ENCODE measurements at regions of chr14 and their contacts with region 1.

Region 1: GRCh38 chr14:24215495-24216344 is at the start of gene MDP1:
- DNase-seq: peak; percentile 71 to 93 (median 86)
- ATAC-seq: peak; percentile 75
- H3K4me3 Mint-ChIP-seq: peak within 1 kb of the TSS; percentile 89 to 94 (median 92)
- H3K27ac Mint-ChIP-seq: peak within 1 kb of the TSS; percentile 93 to 100 (median 99)
- H3K4me1 Mint-ChIP-seq: peaks cover 27 to 55% (median 54%) of the 10 kb centered on the region in 4 donors
- H3K27me3 Mint-ChIP-seq: peaks cover 0 to 2% (median 0%) of the 10 kb centered on the region in 5 donors
- polyA plus RNA-seq, gene MDP1: 33.8 to 39.1 (median 34.5) TPM

Region 2: GRCh38 chr14:24114536-24115450 is 100.9 kb before region 1 on chr14 and contains the starts of genes DCAF11 and NRL:
- POLR2A ChIA-PET with region 1: interaction called, 14 read pairs
- DNase-seq: peak; percentile 96 to 100 (median 99)
- ATAC-seq: peak; percentile 84
- H3K4me3 Mint-ChIP-seq: peak within 1 kb of the TSS; percentile 89 to 99 (median 98)
- H3K27ac Mint-ChIP-seq: peak within 1 kb of the TSS; percentile 95 to 100 (median 99)
- H3K4me1 Mint-ChIP-seq: peaks cover 22 to 39% (median 37%) of the 10 kb centered on the region in 4 donors
- H3K27me3 Mint-ChIP-seq: peaks cover 0 to 4% (median 0%) of the 10 kb centered on the region in 5 donors
- polyA plus RNA-seq, gene DCAF11: 68.0 to 83.8 (median 71.9) TPM
- polyA plus RNA-seq, gene NRL: 3.0 to 3.5 (median 3.1) TPM

Region 3: DNA sequence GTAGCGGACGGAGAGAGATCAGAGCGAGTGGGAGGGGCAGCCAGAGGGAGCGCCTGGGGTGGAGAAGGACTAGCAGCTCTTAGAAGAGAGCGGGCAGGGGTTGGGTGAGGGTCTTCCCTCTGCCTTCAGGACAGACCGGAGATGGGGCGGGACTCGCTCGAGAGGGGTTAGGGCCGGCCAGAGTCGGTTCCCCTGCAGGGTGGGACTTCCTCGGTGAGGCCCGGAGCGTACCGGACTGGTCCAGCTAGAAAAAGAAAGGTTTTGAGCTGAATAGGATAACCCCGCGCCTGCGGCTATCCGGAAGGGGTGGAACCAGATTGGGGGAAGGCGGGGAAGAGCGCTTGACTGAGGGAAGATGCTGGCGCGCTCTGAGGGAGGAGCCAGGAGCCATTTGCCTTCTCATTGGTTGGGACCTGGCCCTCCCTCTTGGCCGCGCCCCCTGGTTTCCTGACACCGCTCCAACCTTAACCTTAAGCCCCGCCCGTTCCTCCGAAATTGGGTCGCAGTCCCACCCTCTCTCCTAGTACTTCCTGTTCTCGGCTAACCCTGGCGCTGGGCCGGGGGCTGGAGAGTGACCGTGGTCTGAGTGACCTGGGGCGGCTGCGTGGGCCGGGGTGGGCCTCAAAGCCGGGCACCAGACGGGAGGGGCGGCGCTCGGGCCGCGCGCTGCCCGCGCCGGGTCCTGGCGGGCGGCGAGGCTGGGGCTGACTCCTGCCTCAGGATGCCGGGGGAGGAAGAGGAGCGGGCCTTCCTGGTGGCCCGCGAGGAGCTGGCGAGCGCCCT is 68.6 kb before region 1 on chr14 and contains the start of gene RNF31:
- POLR2A ChIA-PET with region 1: interaction called, 15 read pairs
- DNase-seq: peak; percentile 91 to 98 (median 96)
- ATAC-seq: peak; percentile 87 to 90
- H3K4me3 Mint-ChIP-seq: peak within 1 kb of the TSS; percentile 94 to 100 (median 98)
- H3K27ac Mint-ChIP-seq: peak within 1 kb of the TSS; percentile 91 to 99 (median 96)
- H3K4me1 Mint-ChIP-seq: peaks cover 22 to 71% (median 69%) of the 10 kb centered on the region in 4 donors
- H3K27me3 Mint-ChIP-seq: no peaks in the 10 kb centered on the region
- polyA plus RNA-seq, gene RNF31: 34.1 to 45.3 (median 37.6) TPM

Region 4: DNA sequence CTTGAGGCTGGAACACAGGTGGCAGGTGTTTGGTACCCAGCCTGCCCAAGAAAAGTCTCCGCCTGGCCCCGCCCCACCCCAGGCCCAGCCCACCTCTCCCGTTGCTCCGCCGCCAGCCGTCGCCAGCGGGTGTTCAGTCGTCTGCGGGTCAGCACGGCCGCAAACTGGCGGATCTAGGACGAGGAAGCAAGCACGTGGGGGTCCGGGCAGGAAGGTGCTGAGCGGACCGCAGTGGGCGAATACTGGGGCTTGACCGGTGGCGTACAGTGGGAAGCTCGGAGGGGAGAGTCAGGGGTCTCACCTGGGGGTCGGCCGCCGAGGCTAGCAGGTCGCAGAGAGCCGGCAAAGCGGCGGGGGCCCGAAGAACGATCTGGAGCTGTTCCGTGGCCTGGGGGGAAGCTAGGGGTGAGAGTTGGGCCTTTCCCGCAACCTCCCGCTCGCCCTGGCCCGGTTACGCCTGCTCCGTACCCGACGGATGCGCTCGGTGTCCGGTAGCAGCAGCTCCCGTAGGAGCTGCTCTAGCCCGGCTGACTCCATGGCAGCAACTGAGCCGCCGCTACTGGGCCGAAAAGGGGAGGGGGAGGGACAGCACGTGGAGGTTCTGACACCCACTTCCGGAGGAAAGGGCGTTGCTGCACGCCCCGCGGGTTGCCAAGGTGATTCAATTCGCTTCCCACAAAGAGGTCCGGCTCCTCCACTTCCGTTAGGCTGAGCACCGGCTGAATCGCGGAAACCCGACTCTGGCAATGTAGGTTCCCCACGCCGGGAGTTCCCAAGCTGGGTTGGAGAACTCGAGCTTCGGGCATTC is 27.3 kb before region 1 on chr14 and contains the start of gene IPO4:
- POLR2A ChIA-PET with region 1: interaction called, 36 read pairs
- DNase-seq: peak; percentile 85 to 98 (median 94)
- ATAC-seq: peak; percentile 90 to 97
- H3K4me3 Mint-ChIP-seq: peak within 1 kb of the TSS; percentile 80 to 95 (median 90)
- H3K27ac Mint-ChIP-seq: peak within 1 kb of the TSS; percentile 83 to 97 (median 94)
- H3K4me1 Mint-ChIP-seq: peaks cover 14 to 61% (median 44%) of the 10 kb centered on the region in 4 donors
- H3K27me3 Mint-ChIP-seq: peaks cover 0 to 2% (median 0%) of the 10 kb centered on the region in 5 donors
- polyA plus RNA-seq, gene IPO4: 20.2 to 27.5 (median 21.1) TPM

Region 5: DNA sequence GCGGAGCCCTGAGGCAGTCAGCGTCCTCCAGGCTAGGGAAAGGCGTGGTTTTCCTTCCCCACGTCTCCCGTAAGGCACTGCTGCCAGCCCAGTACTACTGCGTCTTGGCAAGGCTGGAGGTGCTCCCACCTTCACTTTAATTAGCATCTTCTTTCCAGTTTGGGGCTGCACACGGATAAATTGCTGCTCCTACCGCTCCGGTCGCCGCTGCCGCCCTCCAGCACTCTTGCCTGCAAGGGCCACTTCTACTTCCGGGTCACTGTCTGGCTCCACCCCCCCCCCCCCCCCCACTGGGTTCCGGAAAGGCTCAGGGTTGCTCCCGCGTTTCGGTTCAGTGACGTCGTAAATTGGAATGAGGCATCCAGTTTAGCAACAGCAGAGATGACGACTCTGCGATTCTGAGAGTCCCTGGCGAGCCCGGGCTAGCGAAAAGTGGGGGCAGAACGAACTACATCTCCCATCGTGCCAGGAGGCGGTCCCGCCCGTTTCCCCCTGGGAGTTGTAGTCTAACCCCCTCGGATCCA is 16.5 kb after region 1 on chr14 and contains the start of gene NEDD8:
- POLR2A ChIA-PET with region 1: interaction called, 50 read pairs
- DNase-seq: peak; percentile 68 to 94 (median 84)
- ATAC-seq: peak; percentile 87 to 89
- H3K4me3 Mint-ChIP-seq: peak within 1 kb of the TSS; percentile 87 to 100 (median 98)
- H3K27ac Mint-ChIP-seq: peak within 1 kb of the TSS; percentile 91 to 99 (median 95)
- H3K4me1 Mint-ChIP-seq: peaks cover 16 to 64% (median 57%) of the 10 kb centered on the region in 4 donors
- H3K27me3 Mint-ChIP-seq: no peaks in the 10 kb centered on the region
- polyA plus RNA-seq, gene NEDD8: 302 to 320 (median 319) TPM

Region 6: GRCh38 chr14:24299255-24300195 is 83.8 kb after region 1 on chr14 and contains the starts of genes DHRS1 and NOP9:
- POLR2A ChIA-PET with region 1: interaction called, 14 read pairs
- DNase-seq: peak; percentile 85 to 96 (median 92)
- ATAC-seq: peak; percentile 79 to 89
- H3K4me3 Mint-ChIP-seq: peak within 1 kb of the TSS; percentile 90 to 99 (median 94)
- H3K27ac Mint-ChIP-seq: peak within 1 kb of the TSS; percentile 94 to 98 (median 97)
- H3K4me1 Mint-ChIP-seq: peaks cover 29 to 55% (median 51%) of the 10 kb centered on the region in 4 donors
- H3K27me3 Mint-ChIP-seq: no peaks in the 10 kb centered on the region
- polyA plus RNA-seq, gene DHRS1: 19.6 to 22.4 (median 20.8) TPM
- polyA plus RNA-seq, gene NOP9: 1.3 to 2.2 (median 1.6) TPM